ENCODE measurements at regions of chr6 and their contacts with region 1.

Region 1: GRCh38 chr6:80094017-80094416 is 12.5 kb upstream of the BCKDHB start:
- DNase-seq: peak; percentile 26 to 38 (median 32)
- ATAC-seq: peak; percentile 49; the same call in 1 of the 3 replicates
- H3K4me3 ChIP-seq: no peak overlapping the region
- H3K27ac ChIP-seq: no peak overlapping the region
- H3K4me1 ChIP-seq: no peaks in the 10 kb centered on the region
- H3K27me3 ChIP-seq: no peaks in the 10 kb centered on the region; a peak in 1 of 5 replicates
- CTCF ChIP-seq: peak; percentile 34 to 67 (median 38); a peak in 3 of 6 replicates
- EP300 ChIP-seq: no peak
- POLR2A ChIP-seq: no peak
- RAD21 ChIP-seq: peak; percentile 61 to 77

Region 2: DNA sequence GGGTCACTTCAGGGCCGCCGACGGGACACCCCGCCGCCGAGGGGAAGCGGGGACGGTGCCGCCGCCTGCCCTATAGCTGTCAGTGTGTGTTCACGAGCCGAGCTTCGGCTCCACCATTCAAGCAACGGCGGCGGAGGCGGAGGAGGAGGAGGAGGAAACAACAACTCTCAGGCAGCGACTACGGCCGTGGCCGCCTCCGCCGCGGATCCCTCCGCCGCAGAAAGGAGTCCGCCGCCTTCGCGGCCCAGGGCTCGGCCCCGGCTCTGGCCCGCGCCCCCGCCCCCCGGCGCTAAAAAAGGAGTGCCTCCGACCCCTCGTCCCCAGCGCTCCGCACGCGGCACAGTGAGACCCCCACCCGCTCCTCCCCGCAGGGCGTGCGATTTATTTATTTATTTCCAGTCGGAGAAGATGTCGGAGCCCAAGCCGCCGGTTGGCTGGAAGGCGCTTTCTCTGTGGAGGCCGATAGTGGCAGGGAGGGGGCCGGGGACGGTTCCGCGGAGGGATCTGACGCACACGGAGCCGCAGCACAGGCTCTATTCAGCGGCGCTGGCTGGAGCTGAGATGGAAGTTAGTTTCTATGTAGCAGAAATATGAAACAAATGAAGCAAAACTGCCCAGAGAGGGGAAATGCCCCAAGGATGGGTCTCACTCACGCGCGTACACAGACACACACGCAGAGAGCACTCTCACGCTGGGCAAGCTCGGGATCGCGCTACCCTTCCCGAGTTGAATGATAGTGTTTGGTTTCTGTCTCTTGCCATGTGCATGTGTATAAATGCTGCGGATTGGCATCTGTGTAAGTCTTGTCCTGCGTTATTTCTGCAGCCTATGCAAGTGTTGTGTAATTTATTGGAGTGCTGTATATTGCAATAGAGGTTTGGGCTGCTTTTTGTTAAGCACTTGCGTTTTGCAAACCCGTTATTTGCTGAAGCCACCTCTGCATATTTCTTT is 1015.7 kb before region 1 on chr6 and contains the start of gene PHIP:
- CTCF ChIA-PET with region 1: no interaction called
- POLR2A ChIA-PET with region 1: no interaction called
- in situ Hi-C with region 1: no loop called
- intact Hi-C with region 1: no loop called
- DNase-seq: peak; percentile 80 to 94 (median 82)
- ATAC-seq: peak; percentile 78
- H3K4me3 ChIP-seq: peak within 1 kb of the TSS; percentile 83
- H3K27ac ChIP-seq: peak within 1 kb of the TSS; percentile 95
- H3K4me1 ChIP-seq: peaks cover 0 to 9% of the 10 kb centered on the region in 2 experiments; a peak in 3 of 5 replicates
- H3K27me3 ChIP-seq: no peaks in the 10 kb centered on the region
- CTCF ChIP-seq: no peak
- EP300 ChIP-seq: no peak; the same call in none of the 2 replicates
- POLR2A ChIP-seq: peak; percentile 90
- RAD21 ChIP-seq: no peak
- polyA plus RNA-seq, gene PHIP: 8.1 to 8.9 TPM

Region 3: DNA sequence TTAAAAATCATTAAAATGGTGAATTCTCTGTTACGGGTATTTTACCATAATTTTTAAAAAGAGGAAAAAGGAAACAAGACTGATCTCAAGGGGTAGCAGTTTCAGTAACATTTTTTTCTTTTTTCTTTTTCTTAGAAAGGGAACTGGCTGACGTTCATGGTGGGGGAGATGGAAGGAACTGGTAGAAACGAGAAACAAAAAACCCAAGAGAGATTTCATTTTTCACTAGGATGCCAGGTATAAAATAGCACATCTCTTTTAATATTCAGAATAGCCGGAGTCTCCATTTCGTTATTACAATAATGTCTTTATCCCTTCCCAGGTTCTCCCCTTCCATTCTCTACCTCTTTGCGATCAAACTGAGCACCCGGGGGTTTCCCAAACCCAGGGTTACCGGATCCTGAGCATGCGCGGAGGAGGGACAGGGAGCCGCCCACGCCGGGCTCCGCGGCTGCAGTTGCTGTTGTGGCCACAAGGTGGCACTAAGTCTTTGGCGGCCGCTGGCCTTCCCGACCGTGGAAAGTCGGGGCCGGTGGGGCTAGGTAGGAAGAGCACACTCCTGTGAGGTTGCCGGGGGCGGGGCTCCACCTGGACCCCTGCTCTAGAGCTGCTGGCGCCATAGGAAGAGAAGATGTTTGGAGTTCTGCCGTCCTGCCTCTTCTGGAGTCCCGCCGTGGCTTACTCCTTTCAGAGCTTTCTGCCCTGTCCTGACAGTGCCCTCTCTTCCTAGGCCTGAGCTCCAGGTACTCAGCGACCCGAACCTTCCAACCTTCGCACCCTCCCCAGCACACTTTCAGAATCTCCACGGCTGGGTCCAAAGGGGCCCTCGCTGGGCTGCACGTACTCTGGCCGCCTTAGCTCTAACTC is 316.1 kb before region 1 on chr6:
- CTCF ChIA-PET with region 1: no interaction called
- POLR2A ChIA-PET with region 1: no interaction called
- in situ Hi-C with region 1: no loop called
- intact Hi-C with region 1: loop called (anchors 1 kb)
- DNase-seq: peak; percentile 89 to 95 (median 92)
- ATAC-seq: peak; percentile 98
- H3K4me3 ChIP-seq: peak overlapping the region; percentile 26
- H3K27ac ChIP-seq: no peak overlapping the region
- H3K4me1 ChIP-seq: peaks cover 0 to 6% of the 10 kb centered on the region in 2 experiments; a peak in 3 of 5 replicates
- H3K27me3 ChIP-seq: no peaks in the 10 kb centered on the region; a peak in 1 of 5 replicates
- CTCF ChIP-seq: peak; percentile 92 to 95 (median 93)
- EP300 ChIP-seq: no peak
- POLR2A ChIP-seq: no peak
- RAD21 ChIP-seq: peak; percentile 85 to 87

Region 4: DNA sequence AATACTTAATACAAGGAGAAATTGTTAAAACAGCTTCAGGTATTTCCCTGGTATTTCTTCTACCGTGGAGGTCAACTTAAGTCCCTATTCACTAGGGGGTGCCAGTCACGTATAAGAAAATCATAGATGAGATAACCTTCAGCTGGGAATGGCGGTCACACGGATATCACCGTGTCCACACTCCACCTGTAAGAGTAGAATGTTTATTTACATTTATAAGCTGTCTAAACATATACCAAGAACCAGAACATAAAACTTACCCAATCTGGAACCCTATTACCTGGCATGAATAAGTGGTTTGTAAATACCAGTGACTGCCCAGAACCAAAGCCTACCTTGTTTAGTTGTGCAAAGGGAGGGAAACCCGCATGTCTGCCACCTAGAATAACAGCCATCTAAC is 144.8 kb before region 1 on chr6:
- CTCF ChIA-PET with region 1: interaction called, 25 read pairs
- POLR2A ChIA-PET with region 1: no interaction called
- in situ Hi-C with region 1: loop called (anchors 10 kb)
- intact Hi-C with region 1: loop called (anchors 1 kb)
- DNase-seq: peak; percentile 27 to 85 (median 39)
- ATAC-seq: peak; percentile 95
- H3K4me3 ChIP-seq: no peak overlapping the region
- H3K27ac ChIP-seq: no peak overlapping the region
- H3K4me1 ChIP-seq: peaks cover 0 to 10% of the 10 kb centered on the region in 2 experiments; a peak in 1 of 5 replicates
- H3K27me3 ChIP-seq: 0 out of 5 replicates have a peak, but pooled peaks cover 0 to 5% of the 10 kb centered on the region in 2 experiments
- CTCF ChIP-seq: peak; percentile 63 to 76 (median 66)
- EP300 ChIP-seq: no peak
- POLR2A ChIP-seq: no peak
- RAD21 ChIP-seq: peak; percentile 71 to 81

Region 5: DNA sequence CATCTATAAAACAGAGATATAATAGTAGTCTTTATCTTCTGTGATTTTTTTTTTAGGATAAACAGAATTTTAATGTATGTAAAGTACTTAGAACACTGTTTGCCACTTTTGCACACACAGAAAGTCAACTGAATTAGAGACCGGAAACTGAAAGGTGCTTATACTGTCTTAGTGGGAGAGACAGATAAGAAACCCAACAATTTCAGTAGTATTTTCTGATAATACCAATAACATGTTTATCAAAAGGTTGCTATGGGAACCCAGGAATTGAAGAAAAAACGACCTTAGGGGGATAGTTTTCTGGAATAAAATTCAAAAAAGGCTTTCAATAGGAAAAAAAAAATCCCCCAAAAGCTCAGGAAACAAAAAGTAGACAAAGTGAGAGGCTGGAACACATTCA is 151.0 kb after region 1 on chr6:
- CTCF ChIA-PET with region 1: no interaction called
- POLR2A ChIA-PET with region 1: no interaction called
- in situ Hi-C with region 1: no loop called
- intact Hi-C with region 1: no loop called
- DNase-seq: no peak
- ATAC-seq: no peak
- H3K4me3 ChIP-seq: no peak overlapping the region
- H3K27ac ChIP-seq: no peak overlapping the region
- H3K4me1 ChIP-seq: peaks cover 0 to 7% of the 10 kb centered on the region in 2 experiments; a peak in 2 of 5 replicates
- H3K27me3 ChIP-seq: no peaks in the 10 kb centered on the region
- CTCF ChIP-seq: no peak
- EP300 ChIP-seq: no peak
- POLR2A ChIP-seq: no peak
- RAD21 ChIP-seq: no peak

Region 6: GRCh38 chr6:80348263-80348662 is 254.2 kb after region 1 on chr6:
- CTCF ChIA-PET with region 1: no interaction called
- POLR2A ChIA-PET with region 1: no interaction called
- in situ Hi-C with region 1: no loop called
- intact Hi-C with region 1: no loop called
- DNase-seq: no peak
- ATAC-seq: no peak
- H3K4me3 ChIP-seq: no peak overlapping the region
- H3K27ac ChIP-seq: no peak overlapping the region
- H3K4me1 ChIP-seq: no peaks in the 10 kb centered on the region
- H3K27me3 ChIP-seq: no peaks in the 10 kb centered on the region
- CTCF ChIP-seq: no peak
- EP300 ChIP-seq: no peak
- POLR2A ChIP-seq: no peak
- RAD21 ChIP-seq: no peak